ENCODE measurements at regions of chr12 and their contacts with region 1.

Region 1: DNA sequence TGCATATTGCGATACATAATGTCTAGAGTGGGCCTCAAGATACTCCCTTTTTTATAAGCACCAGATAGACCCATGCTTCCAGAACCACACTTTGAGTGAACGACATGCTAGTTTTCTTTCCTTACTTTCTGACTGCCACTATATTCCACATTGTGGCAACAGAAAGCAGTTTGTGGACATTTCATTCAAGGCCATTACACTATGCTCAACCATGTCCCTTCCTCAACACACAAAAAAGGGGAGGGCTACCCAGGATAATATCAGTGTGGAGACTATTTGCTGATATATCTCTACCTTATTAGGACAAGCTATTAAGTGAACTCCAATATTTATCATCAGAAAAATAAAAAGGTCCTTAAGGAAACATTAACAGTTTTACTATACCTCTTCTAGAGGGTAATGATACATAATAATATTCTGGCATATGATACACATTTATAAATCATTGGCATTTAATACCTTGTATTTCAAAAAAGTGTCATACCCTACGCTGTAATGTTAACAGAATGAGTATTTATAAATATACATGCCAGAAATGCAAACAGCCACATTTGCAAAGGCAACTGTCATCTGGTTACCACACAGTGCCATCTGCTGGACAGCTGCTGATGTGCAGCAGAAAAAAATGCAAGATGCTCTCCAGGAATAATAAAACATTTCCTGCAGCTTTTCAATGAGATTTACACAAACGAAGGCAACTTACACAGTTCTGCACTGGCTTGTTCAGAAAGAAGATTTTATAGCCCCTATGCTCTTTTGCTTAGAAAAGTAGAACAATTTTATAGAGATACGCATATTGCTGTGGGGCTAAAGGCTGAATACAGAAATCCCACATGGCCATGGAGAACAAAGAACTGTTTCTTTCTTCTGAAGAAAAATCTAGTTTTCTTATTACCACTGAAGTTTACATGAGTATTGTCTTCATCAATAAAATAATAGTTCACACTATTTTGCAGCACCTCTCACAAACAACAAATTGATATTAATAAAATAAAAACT is 182.2 kb upstream of the GRIP1 start:
- DNase-seq: peak; percentile 26
- H3K4me3 Mint-ChIP-seq: no peak overlapping the region
- H3K27ac Mint-ChIP-seq: no peak overlapping the region
- H3K4me1 Mint-ChIP-seq: no peaks in the 10 kb centered on the region
- H3K27me3 Mint-ChIP-seq: peaks cover 14% of the 10 kb centered on the region

Region 2: DNA sequence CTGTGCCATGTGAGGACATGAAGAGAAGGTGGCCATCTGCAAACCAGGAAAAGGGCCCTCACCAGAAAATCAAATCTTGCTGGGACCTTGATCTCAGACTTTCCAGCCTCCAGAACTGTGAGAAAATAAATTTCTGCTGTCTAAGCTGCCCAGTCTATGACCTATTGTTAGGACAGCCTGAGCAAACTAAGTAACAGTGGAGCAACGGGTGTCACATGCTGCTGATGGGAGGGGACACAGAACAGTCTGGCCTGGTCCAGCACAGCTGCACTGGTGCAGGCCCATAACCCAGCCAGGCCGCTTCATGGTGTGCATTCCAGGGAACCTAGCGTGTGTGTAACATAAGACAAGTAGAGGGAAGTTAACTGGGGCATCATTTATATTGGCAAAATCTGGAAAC is 224.3 kb before region 1 on chr12:
- intact Hi-C with region 1: no loop called
- DNase-seq: no peak
- H3K4me3 Mint-ChIP-seq: no peak overlapping the region
- H3K27ac Mint-ChIP-seq: no peak overlapping the region
- H3K4me1 Mint-ChIP-seq: no peaks in the 10 kb centered on the region
- H3K27me3 Mint-ChIP-seq: no peaks in the 10 kb centered on the region

Region 3: GRCh38 chr12:66688846-66689439 is 172.1 kb before region 1 on chr12:
- intact Hi-C with region 1: loop called (anchors 1 kb)
- DNase-seq: no peak
- H3K4me3 Mint-ChIP-seq: no peak overlapping the region
- H3K27ac Mint-ChIP-seq: no peak overlapping the region
- H3K4me1 Mint-ChIP-seq: no peaks in the 10 kb centered on the region
- H3K27me3 Mint-ChIP-seq: peaks cover 4% of the 10 kb centered on the region

Region 4: DNA sequence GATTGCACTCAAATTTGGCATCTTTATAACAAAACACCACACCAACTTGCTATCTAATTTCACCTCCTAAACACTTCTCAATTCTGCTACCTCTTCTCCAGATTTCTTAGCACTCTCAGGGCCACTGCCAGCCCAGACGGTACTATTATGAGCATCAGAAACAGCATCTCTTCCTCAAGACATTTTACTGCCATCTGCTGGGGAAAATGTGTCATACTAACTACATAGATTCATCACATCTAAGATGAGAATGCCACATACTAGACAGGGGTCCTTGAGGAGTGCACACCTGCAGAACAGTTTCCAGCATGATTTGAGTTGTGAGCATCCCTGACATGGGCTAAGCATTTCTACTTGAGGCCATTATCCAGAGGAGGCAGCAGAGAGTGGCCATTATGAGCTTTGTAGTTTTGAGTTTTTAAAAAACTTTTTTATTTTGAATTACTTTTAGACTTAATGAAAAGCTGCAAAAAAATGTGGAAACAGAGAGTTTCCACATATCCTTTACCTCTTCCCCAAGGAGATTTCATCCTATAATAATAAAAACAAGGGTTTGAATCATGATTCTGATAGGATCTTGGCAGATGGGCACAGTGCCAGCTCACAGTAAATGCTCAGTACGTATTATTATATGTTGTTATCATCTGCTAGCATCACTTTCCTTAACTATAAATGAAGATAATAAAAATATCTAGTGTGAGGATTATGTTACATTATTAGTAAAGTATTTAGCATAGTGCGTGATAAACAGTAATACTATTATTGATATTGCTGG is 167.0 kb before region 1 on chr12:
- intact Hi-C with region 1: loop called (anchors 1 kb)
- DNase-seq: no peak
- H3K4me3 Mint-ChIP-seq: no peak overlapping the region
- H3K27ac Mint-ChIP-seq: no peak overlapping the region
- H3K4me1 Mint-ChIP-seq: no peaks in the 10 kb centered on the region
- H3K27me3 Mint-ChIP-seq: peaks cover 14% of the 10 kb centered on the region

Region 5: GRCh38 chr12:66708704-66709456 is 152.2 kb before region 1 on chr12:
- intact Hi-C with region 1: loop called (anchors 5 kb)
- DNase-seq: no peak
- H3K4me3 Mint-ChIP-seq: no peak overlapping the region
- H3K27ac Mint-ChIP-seq: no peak overlapping the region
- H3K4me1 Mint-ChIP-seq: peaks cover 12% of the 10 kb centered on the region
- H3K27me3 Mint-ChIP-seq: peaks cover 7% of the 10 kb centered on the region

Region 6: DNA sequence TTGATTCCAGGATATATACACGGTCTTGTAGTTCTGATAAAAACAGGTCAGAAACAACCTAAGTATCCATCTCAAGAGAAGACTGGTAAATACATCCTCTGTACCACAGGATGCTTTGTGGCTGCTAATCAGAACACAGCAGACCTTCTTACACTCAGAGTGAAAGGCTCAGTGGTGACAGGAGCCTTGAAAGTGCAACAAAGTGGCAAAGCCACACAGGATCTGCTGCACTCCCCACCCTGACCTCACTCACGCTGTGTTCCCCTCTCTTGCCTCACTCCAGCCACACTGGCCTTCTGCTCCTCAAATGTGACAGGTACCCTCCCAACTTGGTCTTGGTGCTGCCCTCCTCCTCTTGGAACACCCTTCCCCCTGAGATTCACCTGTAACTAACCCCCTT is 84.1 kb before region 1 on chr12:
- intact Hi-C with region 1: loop called (anchors 5 kb)
- DNase-seq: peak; percentile 65
- H3K4me3 Mint-ChIP-seq: peak overlapping the region; percentile 45
- H3K27ac Mint-ChIP-seq: no peak overlapping the region
- H3K4me1 Mint-ChIP-seq: peaks cover 14% of the 10 kb centered on the region
- H3K27me3 Mint-ChIP-seq: peaks cover 60% of the 10 kb centered on the region